Right ventricle myocardium superior (tissue), 1 donor: ENCODE measurements at regions of chr13 and their contacts with region 1.

Region 1: GRCh38 chr13:36736119-36736726 is 62.4 kb downstream of the SERTM1 start:
- DNase-seq: no peak
- ATAC-seq: no peak

Region 2: DNA sequence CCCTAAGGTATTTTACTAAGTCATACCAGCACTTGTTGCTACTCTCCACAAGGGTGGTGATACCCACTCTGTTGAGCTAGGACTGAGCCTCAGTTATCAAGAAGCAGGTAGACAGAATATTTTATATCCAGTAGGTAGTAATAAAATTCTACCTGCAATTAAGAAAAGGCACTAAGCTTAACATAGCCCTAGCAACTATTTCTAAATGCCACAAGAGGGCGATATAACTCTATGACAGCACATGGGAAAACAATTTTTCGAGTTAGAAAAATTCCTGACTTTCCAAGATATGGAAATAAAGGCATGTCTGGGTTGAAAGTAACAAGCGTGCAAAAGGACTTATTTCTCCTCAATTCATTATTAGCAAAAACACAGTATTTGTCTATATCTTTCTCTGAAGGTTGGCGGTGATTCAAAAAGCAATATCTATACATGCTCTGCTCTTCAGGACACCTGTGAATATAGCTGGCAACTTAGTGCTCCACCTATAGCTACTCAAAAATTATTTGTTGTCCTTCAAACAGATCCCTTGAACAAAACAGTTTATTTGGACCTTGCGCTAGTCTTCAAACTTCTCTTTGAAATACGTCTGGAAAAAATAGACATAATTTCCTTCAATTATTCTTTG is 453.3 kb before region 1 on chr13:
- intact Hi-C with region 1: loop called (anchors 10 kb)
- DNase-seq: no peak
- ATAC-seq: peak; percentile 61

Region 3: DNA sequence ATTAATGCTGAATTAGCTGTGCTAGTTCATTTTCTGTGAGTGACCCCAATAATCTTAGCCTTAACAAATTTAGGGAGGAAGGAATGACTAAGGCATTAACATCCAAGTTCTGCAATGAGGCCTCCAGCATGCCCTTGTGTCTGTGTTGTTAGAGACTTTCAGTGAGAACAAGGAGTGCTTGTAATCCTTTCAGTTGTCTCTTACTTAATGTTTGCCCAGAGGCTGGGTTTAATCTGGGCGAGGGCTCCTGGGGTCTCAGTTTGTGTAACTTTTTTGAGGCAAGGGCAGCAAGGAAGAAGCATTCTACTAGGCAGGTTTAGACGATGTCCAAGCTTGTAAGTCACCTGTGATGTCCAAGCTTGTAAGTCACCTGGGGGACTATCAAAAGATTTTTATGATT is 279.6 kb before region 1 on chr13:
- intact Hi-C with region 1: loop called (anchors 2 kb)
- DNase-seq: no peak
- ATAC-seq: no peak